ENCODE measurements at regions of chr17 and their contacts with region 1.

Region 1: GRCh38 chr17:49694847-49695683 is 12.7 kb downstream of the SLC35B1 start:
- DNase-seq: peak; percentile 52 to 70 (median 61)
- H3K4me3 ChIP-seq: no peak overlapping the region
- H3K4me3 Mint-ChIP-seq: peak overlapping the region in 3 of 8 donors; percentile 1 to 41 (median 4)
- H3K27ac ChIP-seq: no peak overlapping the region
- H3K27ac Mint-ChIP-seq: peak overlapping the region; percentile 65 to 90 (median 83)
- H3K4me1 ChIP-seq: peaks cover 19% of the 10 kb centered on the region
- H3K4me1 Mint-ChIP-seq: peaks cover 22 to 51% (median 30%) of the 10 kb centered on the region in 4 donors
- H3K27me3 ChIP-seq: no peaks in the 10 kb centered on the region
- H3K27me3 Mint-ChIP-seq: no peaks in the 10 kb centered on the region

Region 2: GRCh38 chr17:49404361-49404760 is 290.7 kb before region 1 on chr17:
- CTCF ChIA-PET with region 1: no interaction called
- POLR2A ChIA-PET with region 1: no interaction called
- intact Hi-C with region 1: no loop called
- DNase-seq: no peak
- H3K4me3 ChIP-seq: no peak overlapping the region
- H3K4me3 Mint-ChIP-seq: no peak overlapping the region
- H3K27ac ChIP-seq: no peak overlapping the region
- H3K27ac Mint-ChIP-seq: peak overlapping the region in 2 of 7 donors; percentile 22 to 65
- H3K4me1 ChIP-seq: peaks cover 10% of the 10 kb centered on the region
- H3K4me1 Mint-ChIP-seq: peaks cover 5 to 23% (median 11%) of the 10 kb centered on the region in 4 donors
- H3K27me3 ChIP-seq: no peaks in the 10 kb centered on the region
- H3K27me3 Mint-ChIP-seq: no peaks in the 10 kb centered on the region

Region 3: GRCh38 chr17:49548506-49549310 is 146.4 kb before region 1 on chr17:
- CTCF ChIA-PET with region 1: no interaction called
- POLR2A ChIA-PET with region 1: no interaction called
- intact Hi-C with region 1: no loop called
- DNase-seq: no peak
- H3K4me3 ChIP-seq: no peak overlapping the region
- H3K4me3 Mint-ChIP-seq: no peak overlapping the region
- H3K27ac ChIP-seq: no peak overlapping the region
- H3K27ac Mint-ChIP-seq: peak overlapping the region in 1 of 7 donors; percentile 37
- H3K4me1 ChIP-seq: no peaks in the 10 kb centered on the region
- H3K4me1 Mint-ChIP-seq: no peaks in the 10 kb centered on the region
- H3K27me3 ChIP-seq: no peaks in the 10 kb centered on the region
- H3K27me3 Mint-ChIP-seq: peaks cover 3 to 8% of the 10 kb centered on the region in 2 donors

Region 4: DNA sequence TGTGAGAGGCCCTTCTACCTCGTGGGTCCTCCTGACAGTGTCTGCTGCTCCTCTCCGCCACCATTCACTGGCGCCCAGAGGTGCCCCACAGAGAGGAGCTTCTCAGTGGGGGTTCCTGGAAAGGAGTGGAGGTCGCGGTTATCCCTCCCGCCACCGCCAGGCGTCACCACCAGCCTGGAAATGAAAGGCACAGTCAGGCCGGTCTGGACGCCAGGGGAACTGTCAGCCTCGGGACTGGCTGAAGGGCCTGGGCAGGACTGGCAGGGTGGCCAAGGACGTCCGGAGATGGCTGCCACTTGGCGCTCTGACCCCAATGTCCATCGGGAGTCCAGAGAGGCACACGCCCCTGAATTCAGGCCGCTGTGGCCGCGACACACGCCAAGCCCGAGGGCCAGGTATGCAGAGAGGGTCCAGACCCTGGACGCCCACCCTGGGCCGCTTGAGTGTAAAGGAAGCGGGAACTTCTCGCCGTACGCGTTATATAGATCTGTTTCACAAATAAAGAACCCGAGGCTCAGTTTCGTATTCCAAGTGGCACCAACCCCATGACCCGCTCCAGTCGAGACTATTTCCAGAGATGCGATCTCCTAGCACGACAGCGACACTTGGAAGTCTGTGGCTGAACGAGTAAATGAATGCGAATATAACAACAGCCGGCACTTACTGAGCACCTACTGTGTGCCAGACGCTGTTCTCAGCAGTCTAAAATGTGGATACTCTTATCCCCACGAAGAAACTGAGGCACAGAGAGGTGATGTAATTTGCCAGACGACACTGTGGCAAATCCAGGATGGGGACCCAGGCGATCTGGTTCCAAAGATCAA is 127.0 kb before region 1 on chr17:
- CTCF ChIA-PET with region 1: interaction called, 219 read pairs
- POLR2A ChIA-PET with region 1: interaction called, 28 read pairs
- intact Hi-C with region 1: loop called (anchors 1 kb)
- DNase-seq: peak; percentile 68 to 77 (median 74)
- H3K4me3 ChIP-seq: peak overlapping the region in 1 of 2 donors; percentile 56
- H3K4me3 Mint-ChIP-seq: peak overlapping the region; percentile 28 to 82 (median 60)
- H3K27ac ChIP-seq: no peak overlapping the region
- H3K27ac Mint-ChIP-seq: peak overlapping the region in 2 of 7 donors; percentile 46 to 54
- H3K4me1 ChIP-seq: peaks cover 10% of the 10 kb centered on the region
- H3K4me1 Mint-ChIP-seq: peaks cover 8 to 29% (median 19%) of the 10 kb centered on the region in 4 donors
- H3K27me3 ChIP-seq: no peaks in the 10 kb centered on the region
- H3K27me3 Mint-ChIP-seq: peaks cover 6 to 11% of the 10 kb centered on the region in 2 donors

Region 5: GRCh38 chr17:49659661-49660382 is 35.2 kb before region 1 on chr17:
- CTCF ChIA-PET with region 1: interaction called, 10 read pairs
- POLR2A ChIA-PET with region 1: no interaction called
- intact Hi-C with region 1: no loop called
- DNase-seq: no peak
- H3K4me3 ChIP-seq: no peak overlapping the region
- H3K4me3 Mint-ChIP-seq: peak overlapping the region in 3 of 8 donors; percentile 3 to 60 (median 13)
- H3K27ac ChIP-seq: no peak overlapping the region
- H3K27ac Mint-ChIP-seq: peak overlapping the region in 5 of 7 donors; percentile 18 to 50 (median 31)
- H3K4me1 ChIP-seq: peaks cover 34% of the 10 kb centered on the region
- H3K4me1 Mint-ChIP-seq: peaks cover 38 to 52% (median 47%) of the 10 kb centered on the region in 4 donors
- H3K27me3 ChIP-seq: no peaks in the 10 kb centered on the region
- H3K27me3 Mint-ChIP-seq: no peaks in the 10 kb centered on the region